ENCODE measurements at regions of chr9 and their contacts with region 1.

Region 1: DNA sequence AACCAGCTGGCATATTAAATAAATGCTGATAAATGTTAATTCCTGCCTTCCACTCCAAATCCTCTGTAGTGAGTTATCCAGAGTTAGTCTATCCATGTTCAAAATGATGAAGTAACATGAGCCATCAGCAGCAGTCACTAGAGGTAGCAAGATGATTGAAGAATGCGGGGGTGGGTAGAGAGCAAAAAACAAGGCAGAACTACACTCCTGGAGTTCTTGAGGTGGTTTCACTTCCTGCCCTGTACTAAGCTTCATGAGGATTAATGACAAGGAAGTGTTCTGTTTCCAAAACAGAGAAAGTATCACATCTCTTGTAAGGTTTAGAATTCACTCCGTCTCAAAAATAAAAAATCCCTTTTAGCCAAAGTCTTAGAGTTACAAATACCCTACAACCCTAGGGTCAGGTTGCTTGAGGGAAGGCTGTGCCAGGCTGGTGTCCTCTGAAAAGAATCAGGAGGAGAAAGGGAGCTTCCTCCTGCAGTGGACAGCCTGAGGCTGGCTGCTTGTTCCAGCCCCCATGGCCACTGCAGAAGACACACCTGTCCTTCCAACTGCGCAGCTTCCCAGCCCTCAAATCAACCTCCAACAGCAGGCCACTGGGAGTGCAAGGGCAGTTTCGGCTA is 180.2 kb downstream of the DENND1A start:
- DNase-seq: no peak

Region 2: GRCh38 chr9:123807251-123807650 is 57.6 kb after region 1 on chr9:
- intact Hi-C with region 1: no loop called
- DNase-seq: no peak

Region 3: GRCh38 chr9:123863164-123863855 is 113.6 kb after region 1 on chr9:
- intact Hi-C with region 1: loop called (anchors 10 kb)
- DNase-seq: no peak